ENCODE measurements at regions of chr1 and their contacts with region 1.

Region 1: DNA sequence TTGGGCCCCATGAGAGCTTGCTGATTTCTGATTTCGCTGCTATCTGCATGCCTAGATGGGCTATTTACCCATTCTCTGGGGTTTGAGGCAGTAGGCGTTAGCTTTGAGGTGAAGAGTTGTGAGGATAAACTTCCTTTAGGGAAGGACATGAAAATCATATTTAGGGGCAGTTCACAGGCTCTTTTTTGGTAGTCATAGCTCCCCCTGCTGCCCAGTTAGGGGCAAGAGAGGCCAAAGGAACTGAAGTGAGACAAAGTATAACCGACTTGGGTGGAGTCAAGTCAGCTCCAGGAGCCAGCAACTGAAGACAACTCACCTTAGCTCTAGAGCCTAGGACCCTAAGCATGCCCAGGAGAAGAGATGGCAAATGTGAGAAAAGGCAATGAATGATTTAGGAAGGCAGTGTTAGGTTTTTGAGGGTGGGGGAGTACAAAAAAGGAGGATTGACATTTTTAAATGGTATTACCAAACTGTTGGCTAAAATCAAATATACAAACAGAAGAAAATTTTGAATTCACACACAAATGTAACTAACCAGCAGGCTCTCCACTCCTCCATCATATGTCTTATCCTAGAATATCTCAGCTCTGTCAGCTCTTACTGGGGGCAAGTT is 625.2 kb downstream of the LMO4 start:
- DNase-seq: peak; percentile 10 to 68 (median 48)
- ATAC-seq: peak; percentile 46
- H3K4me3 ChIP-seq: no peak overlapping the region
- H3K4me3 Mint-ChIP-seq: no peak overlapping the region
- H3K27ac ChIP-seq: no peak overlapping the region
- H3K27ac Mint-ChIP-seq: no peak overlapping the region
- H3K4me1 ChIP-seq: no peaks in the 10 kb centered on the region
- H3K4me1 Mint-ChIP-seq: no peaks in the 10 kb centered on the region
- H3K27me3 ChIP-seq: no peaks in the 10 kb centered on the region
- H3K27me3 Mint-ChIP-seq: peaks cover 14% of the 10 kb centered on the region
- CTCF ChIP-seq: peak; percentile 67

Region 2: DNA sequence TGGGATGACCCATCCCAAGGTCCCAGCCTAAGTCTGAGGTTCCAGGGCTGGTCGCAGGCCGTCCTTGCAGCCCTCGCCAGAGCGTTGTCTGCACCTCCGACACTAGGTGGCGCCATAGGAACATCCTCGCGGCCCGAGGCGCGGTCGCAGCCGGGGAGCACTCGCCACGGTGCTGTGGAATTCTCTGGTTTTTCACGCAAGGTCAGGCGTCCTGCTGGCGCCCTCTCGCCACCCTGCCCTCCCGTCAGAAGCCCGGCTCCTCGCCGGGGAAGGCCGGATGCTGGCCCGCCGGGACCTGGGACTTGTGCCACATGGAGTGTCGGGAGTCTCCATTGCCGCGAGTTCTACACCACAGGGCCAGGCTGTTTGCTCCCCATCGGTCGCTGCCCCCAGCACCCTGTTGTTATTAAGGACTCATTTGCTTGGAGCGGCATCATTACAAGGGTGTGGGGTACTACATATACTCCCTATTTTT is 822.0 kb before region 1 on chr1:
- CTCF ChIA-PET with region 1: interaction called, 3 read pairs
- POLR2A ChIA-PET with region 1: interaction called, 3 read pairs
- intact Hi-C with region 1: loop called (anchors 1 to 2 kb)
- DNase-seq: peak; percentile 43 to 83 (median 75)
- ATAC-seq: peak; percentile 90
- H3K4me3 ChIP-seq: peak overlapping the region; percentile 50 to 85
- H3K4me3 Mint-ChIP-seq: peak overlapping the region; percentile 88
- H3K27ac ChIP-seq: no peak overlapping the region
- H3K27ac Mint-ChIP-seq: no peak overlapping the region
- H3K4me1 ChIP-seq: peaks cover 7% of the 10 kb centered on the region
- H3K4me1 Mint-ChIP-seq: peaks cover 12% of the 10 kb centered on the region
- H3K27me3 ChIP-seq: peaks cover 4 to 6% of the 10 kb centered on the region in 2 experiments
- H3K27me3 Mint-ChIP-seq: peaks cover 39% of the 10 kb centered on the region
- CTCF ChIP-seq: peak; percentile 91

Region 3: DNA sequence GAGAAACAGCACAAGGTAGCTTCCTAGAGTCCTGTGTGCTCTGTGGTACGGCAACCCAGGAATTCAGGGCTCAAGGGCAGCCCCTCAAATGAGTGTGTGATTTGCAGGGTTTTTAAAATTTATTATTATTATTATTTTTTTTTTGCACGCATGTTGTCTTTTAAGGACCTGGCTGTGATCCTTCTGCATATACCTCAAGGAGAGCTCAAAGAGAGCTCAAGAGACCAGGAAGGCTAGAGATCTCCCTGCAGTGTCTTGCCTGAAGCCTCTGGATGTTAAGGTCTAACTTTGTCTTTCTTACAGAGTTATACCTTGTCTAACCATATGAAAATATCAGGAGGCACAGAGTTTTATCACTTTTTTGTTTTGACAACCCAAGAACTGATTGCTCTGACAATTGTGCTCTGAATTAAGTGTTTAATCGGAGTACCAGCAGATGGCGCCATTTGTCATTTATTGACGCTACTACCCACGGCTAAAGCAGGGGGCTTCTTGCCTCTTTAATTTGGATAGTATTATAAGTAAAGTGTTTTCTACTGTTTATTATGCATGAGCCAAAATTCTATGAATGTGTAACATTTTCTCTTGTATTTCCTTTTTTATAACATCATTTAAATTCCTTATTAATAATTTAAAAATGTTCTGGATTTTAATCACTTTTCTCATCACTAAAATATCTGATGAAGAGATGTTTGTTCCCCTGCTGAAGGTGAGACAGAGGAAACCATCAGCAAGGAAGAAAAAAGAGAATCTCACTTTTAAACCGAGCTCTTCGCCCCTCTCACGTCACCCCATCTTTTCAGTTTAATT is 660.9 kb before region 1 on chr1:
- CTCF ChIA-PET with region 1: interaction called, 55 read pairs
- POLR2A ChIA-PET with region 1: no interaction called
- intact Hi-C with region 1: loop called (anchors 1 kb)
- DNase-seq: peak; percentile 24 to 77 (median 67)
- ATAC-seq: no peak
- H3K4me3 ChIP-seq: no peak overlapping the region
- H3K4me3 Mint-ChIP-seq: no peak overlapping the region
- H3K27ac ChIP-seq: no peak overlapping the region
- H3K27ac Mint-ChIP-seq: no peak overlapping the region
- H3K4me1 ChIP-seq: no peaks in the 10 kb centered on the region
- H3K4me1 Mint-ChIP-seq: no peaks in the 10 kb centered on the region
- H3K27me3 ChIP-seq: no peaks in the 10 kb centered on the region
- H3K27me3 Mint-ChIP-seq: peaks cover 6% of the 10 kb centered on the region
- CTCF ChIP-seq: peak; percentile 86

Region 4: DNA sequence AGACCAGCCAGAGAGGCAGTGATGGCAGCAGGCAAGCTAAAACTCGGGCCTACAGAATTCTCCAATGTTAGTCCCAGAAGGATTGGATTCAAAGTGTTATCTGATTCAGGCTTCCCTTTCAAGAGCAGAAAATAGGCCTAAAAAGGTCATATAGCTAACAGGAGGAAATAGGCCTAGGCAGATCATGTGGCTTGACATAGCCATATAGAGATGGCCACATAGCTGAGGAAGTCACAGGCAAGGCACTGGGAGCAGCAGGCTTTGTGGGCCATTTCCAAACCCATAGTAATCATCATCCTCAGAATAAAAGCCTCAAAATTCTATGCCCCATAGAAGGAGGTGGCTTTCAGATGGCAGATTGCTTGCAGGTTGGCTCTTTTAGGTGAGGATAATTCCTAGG is 654.2 kb before region 1 on chr1:
- CTCF ChIA-PET with region 1: interaction called, 55 read pairs
- POLR2A ChIA-PET with region 1: no interaction called
- intact Hi-C with region 1: no loop called
- DNase-seq: no peak
- ATAC-seq: no peak
- H3K4me3 ChIP-seq: no peak overlapping the region
- H3K4me3 Mint-ChIP-seq: no peak overlapping the region
- H3K27ac ChIP-seq: no peak overlapping the region
- H3K27ac Mint-ChIP-seq: no peak overlapping the region
- H3K4me1 ChIP-seq: no peaks in the 10 kb centered on the region
- H3K4me1 Mint-ChIP-seq: no peaks in the 10 kb centered on the region
- H3K27me3 ChIP-seq: no peaks in the 10 kb centered on the region
- H3K27me3 Mint-ChIP-seq: no peaks in the 10 kb centered on the region
- CTCF ChIP-seq: no peak

Region 5: GRCh38 chr1:87942165-87942564 is 11.7 kb before region 1 on chr1:
- CTCF ChIA-PET with region 1: interaction called, 15 read pairs
- POLR2A ChIA-PET with region 1: no interaction called
- intact Hi-C with region 1: no loop called
- DNase-seq: no peak
- ATAC-seq: no peak
- H3K4me3 ChIP-seq: no peak overlapping the region
- H3K4me3 Mint-ChIP-seq: no peak overlapping the region
- H3K27ac ChIP-seq: no peak overlapping the region
- H3K27ac Mint-ChIP-seq: no peak overlapping the region
- H3K4me1 ChIP-seq: no peaks in the 10 kb centered on the region
- H3K4me1 Mint-ChIP-seq: no peaks in the 10 kb centered on the region
- H3K27me3 ChIP-seq: no peaks in the 10 kb centered on the region
- H3K27me3 Mint-ChIP-seq: peaks cover 2% of the 10 kb centered on the region
- CTCF ChIP-seq: no peak

Measured in CD8-positive, alpha-beta T cell (primary cell).